ENCODE measurements at regions of chr12 and their contacts with region 1.

Region 1: DNA sequence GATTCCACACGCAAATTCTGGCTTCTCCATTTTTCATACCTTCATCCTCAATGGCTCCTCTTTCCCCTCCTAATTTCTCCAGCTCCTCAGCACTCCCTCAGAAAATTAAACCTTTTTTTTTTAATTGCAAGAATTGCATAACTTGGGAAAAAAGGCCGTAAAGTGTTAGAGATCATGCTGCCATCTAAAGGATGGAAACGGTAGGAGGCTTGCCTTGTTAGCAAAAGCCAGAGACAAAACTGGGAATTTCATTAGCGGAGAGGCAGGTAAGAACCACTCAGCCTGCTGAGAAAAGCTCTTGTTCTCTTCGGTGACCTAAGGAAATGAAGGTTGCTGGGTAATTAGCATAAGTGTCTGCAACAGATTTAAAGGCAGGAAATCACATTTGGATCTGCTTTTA is 204.3 kb downstream of the AEBP2 start:
- DNase-seq: no peak
- ATAC-seq: peak in 4 of 8 donors; percentile 29 to 46 (median 43)
- H3K4me3 ChIP-seq: no peak overlapping the region
- H3K27ac ChIP-seq: no peak overlapping the region
- H3K4me1 ChIP-seq: peaks cover 0 to 10% (median 0%) of the 10 kb centered on the region in 9 donors
- H3K27me3 ChIP-seq: no peaks in the 10 kb centered on the region
- CTCF ChIP-seq: peak; percentile 19 to 78 (median 54)

Region 2: GRCh38 chr12:19382111-19382526 is 261.5 kb before region 1 on chr12:
- intact Hi-C with region 1: loop called in 1 of 10 experiments (anchors 10 kb)
- DNase-seq: no peak
- ATAC-seq: peak in 3 of 8 donors; percentile 26 to 51 (median 38)
- H3K4me3 ChIP-seq: no peak overlapping the region
- H3K27ac ChIP-seq: no peak overlapping the region
- H3K4me1 ChIP-seq: peaks cover 0 to 11% (median 0%) of the 10 kb centered on the region in 9 donors
- H3K27me3 ChIP-seq: no peaks in the 10 kb centered on the region
- CTCF ChIP-seq: no peak

Region 3: GRCh38 chr12:19507823-19508222 is 135.8 kb before region 1 on chr12:
- intact Hi-C with region 1: loop called in 7 of 10 experiments (anchors 5 to 10 kb)
- DNase-seq: no peak
- ATAC-seq: peak in 4 of 8 donors; percentile 43 to 71 (median 52)
- H3K4me3 ChIP-seq: no peak overlapping the region
- H3K27ac ChIP-seq: no peak overlapping the region
- H3K4me1 ChIP-seq: peaks cover 0 to 31% (median 9%) of the 10 kb centered on the region in 9 donors
- H3K27me3 ChIP-seq: no peaks in the 10 kb centered on the region
- CTCF ChIP-seq: peak in 8 of 9 donors; percentile 14 to 63 (median 50)

Region 4: DNA sequence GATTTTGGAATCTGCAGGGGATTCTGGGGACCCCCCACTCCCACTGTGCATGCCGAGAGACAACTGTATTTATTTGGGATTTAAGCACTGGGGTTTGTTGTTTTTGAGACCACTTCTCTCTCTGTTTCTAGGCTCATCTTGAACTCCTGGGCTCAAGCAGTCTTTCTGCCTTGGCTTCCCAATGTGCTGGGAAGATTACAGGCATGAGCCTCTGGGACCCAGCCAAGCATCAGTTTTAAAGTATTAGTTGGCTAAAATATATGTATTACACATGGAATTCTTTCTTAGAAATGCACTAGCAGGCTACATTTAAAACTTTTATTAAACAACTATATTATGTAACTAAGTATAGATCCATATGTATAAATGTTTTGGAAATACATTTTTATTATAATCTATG is 126.1 kb before region 1 on chr12:
- intact Hi-C with region 1: loop called in 2 of 10 experiments (anchors 10 kb)
- DNase-seq: no peak
- ATAC-seq: no peak
- H3K4me3 ChIP-seq: no peak overlapping the region
- H3K27ac ChIP-seq: no peak overlapping the region
- H3K4me1 ChIP-seq: peaks cover 0 to 10% (median 0%) of the 10 kb centered on the region in 9 donors
- H3K27me3 ChIP-seq: no peaks in the 10 kb centered on the region
- CTCF ChIP-seq: no peak

Region 5: GRCh38 chr12:19624491-19624890 is 19.1 kb before region 1 on chr12:
- intact Hi-C with region 1: no loop called
- DNase-seq: no peak
- ATAC-seq: no peak
- H3K4me3 ChIP-seq: no peak overlapping the region
- H3K27ac ChIP-seq: no peak overlapping the region
- H3K4me1 ChIP-seq: no peaks in the 10 kb centered on the region
- H3K27me3 ChIP-seq: no peaks in the 10 kb centered on the region
- CTCF ChIP-seq: no peak

Region 6: GRCh38 chr12:19771858-19772257 is 128.2 kb after region 1 on chr12:
- intact Hi-C with region 1: no loop called
- DNase-seq: no peak
- ATAC-seq: peak in 1 of 8 donors; percentile 33
- H3K4me3 ChIP-seq: no peak overlapping the region
- H3K27ac ChIP-seq: no peak overlapping the region
- H3K4me1 ChIP-seq: peaks cover 0 to 8% (median 0%) of the 10 kb centered on the region in 9 donors
- H3K27me3 ChIP-seq: no peaks in the 10 kb centered on the region
- CTCF ChIP-seq: no peak

Measured in heart right ventricle (tissue), 16 donors.